Ascending aorta (tissue), 2 donors: ENCODE measurements at regions of chr1 and their contacts with region 1.

Region 1: GRCh38 chr1:212414328-212415106 is at the start of gene PACC1:
- DNase-seq: peak; percentile 79 to 95
- H3K4me3 ChIP-seq: peak within 1 kb of the TSS; percentile 70 to 95
- H3K27ac ChIP-seq: peak within 1 kb of the TSS; percentile 10 to 28
- H3K4me1 ChIP-seq: peaks cover 0 to 7% of the 10 kb centered on the region in 2 donors
- H3K27me3 ChIP-seq: no peaks in the 10 kb centered on the region
- CTCF ChIP-seq: peak in 1 of 3 experiments; percentile 4
- total RNA-seq, gene PACC1: 0.85 TPM

Region 2: GRCh38 chr1:212432706-212433576 is 18.4 kb after region 1 on chr1 and contains the start of gene NENF:
- intact Hi-C with region 1: loop called (anchors 1 kb)
- DNase-seq: peak; percentile 50 to 92
- H3K4me3 ChIP-seq: peak within 1 kb of the TSS; percentile 87 to 97
- H3K27ac ChIP-seq: peak within 1 kb of the TSS; percentile 88 to 98
- H3K4me1 ChIP-seq: peaks cover 3 to 9% of the 10 kb centered on the region in 2 donors
- H3K27me3 ChIP-seq: no peaks in the 10 kb centered on the region
- CTCF ChIP-seq: peak in 1 of 3 experiments; percentile 14
- total RNA-seq, gene NENF: 186 TPM

Region 3: GRCh38 chr1:212458817-212459216 is 44.3 kb after region 1 on chr1:
- intact Hi-C with region 1: no loop called
- DNase-seq: no peak
- H3K4me3 ChIP-seq: no peak overlapping the region
- H3K27ac ChIP-seq: no peak overlapping the region
- H3K4me1 ChIP-seq: peaks cover 4 to 7% of the 10 kb centered on the region in 2 donors
- H3K27me3 ChIP-seq: no peaks in the 10 kb centered on the region
- CTCF ChIP-seq: no peak